Activated CD8-positive, alpha-beta memory T cell treated with anti-CD3 and anti-CD28 coated beads, Interleukin-2, amount 10 ng/mL, durations not matched to agents 7 days and 5 days (primary cell): ENCODE measurements at regions of chr22 and their contacts with region 1.

Region 1: DNA sequence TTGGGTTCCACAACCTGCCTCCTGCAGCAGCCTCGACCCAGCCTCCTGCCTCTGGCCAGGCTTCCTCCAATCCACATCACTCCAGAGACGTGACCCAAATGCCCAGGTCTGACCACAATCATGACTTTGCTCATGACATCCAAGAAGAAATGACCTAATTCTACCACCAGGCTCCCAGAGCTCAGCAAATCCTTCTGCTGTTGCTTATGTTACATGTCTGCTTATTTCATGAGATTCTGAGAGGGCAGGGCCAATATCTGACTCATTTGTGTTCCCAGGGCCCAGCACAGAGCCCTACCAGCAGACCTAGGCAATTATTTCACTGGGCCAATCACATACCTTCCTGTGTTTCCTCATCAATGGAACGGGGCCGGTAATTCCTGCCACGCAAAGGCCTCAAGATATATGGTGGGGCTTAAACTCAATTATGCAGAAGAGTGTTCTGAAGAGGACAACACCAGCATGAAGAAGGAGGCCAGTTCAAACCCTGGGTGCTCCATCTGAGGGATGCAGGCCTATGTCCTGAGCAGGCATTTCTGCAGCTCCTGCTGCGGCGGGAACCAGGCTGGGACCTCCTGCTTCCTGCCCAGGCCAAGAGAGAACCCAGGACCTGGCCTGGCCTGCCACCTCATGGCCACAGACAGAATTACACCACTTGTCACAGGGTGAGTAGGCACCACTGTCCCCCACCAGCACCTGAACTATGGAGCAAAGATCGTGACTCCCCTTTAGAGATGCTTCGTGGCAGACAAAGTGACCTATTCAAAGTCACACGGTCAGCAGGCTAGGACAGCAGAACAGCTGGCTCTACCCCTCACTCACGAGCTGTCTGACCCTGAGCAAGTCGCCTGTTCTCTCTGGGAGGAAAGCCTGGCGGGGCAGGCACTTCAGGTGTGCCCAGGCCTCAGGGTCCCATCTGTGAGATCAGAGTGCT is 5.9 kb downstream of the CENPM start:
- DNase-seq: peak; percentile 93
- ATAC-seq: peak; percentile 62
- H3K4me3 Mint-ChIP-seq: peak overlapping the region; percentile 34
- H3K27ac Mint-ChIP-seq: peak overlapping the region; percentile 98
- H3K4me1 Mint-ChIP-seq: peaks cover 63% of the 10 kb centered on the region
- H3K27me3 Mint-ChIP-seq: no peaks in the 10 kb centered on the region

Region 2: GRCh38 chr22:41688365-41689211 is 252.5 kb before region 1 on chr22 and contains the start of gene SNU13:
- CTCF ChIA-PET with region 1: interaction called, 10 read pairs
- DNase-seq: peak; percentile 96
- ATAC-seq: peak; percentile 93
- H3K4me3 Mint-ChIP-seq: peak within 1 kb of the TSS; percentile 96
- H3K27ac Mint-ChIP-seq: peak within 1 kb of the TSS; percentile 98
- H3K4me1 Mint-ChIP-seq: peaks cover 33% of the 10 kb centered on the region
- H3K27me3 Mint-ChIP-seq: no peaks in the 10 kb centered on the region
- total RNA-seq, gene SNU13: 176 to 193 TPM

Region 3: DNA sequence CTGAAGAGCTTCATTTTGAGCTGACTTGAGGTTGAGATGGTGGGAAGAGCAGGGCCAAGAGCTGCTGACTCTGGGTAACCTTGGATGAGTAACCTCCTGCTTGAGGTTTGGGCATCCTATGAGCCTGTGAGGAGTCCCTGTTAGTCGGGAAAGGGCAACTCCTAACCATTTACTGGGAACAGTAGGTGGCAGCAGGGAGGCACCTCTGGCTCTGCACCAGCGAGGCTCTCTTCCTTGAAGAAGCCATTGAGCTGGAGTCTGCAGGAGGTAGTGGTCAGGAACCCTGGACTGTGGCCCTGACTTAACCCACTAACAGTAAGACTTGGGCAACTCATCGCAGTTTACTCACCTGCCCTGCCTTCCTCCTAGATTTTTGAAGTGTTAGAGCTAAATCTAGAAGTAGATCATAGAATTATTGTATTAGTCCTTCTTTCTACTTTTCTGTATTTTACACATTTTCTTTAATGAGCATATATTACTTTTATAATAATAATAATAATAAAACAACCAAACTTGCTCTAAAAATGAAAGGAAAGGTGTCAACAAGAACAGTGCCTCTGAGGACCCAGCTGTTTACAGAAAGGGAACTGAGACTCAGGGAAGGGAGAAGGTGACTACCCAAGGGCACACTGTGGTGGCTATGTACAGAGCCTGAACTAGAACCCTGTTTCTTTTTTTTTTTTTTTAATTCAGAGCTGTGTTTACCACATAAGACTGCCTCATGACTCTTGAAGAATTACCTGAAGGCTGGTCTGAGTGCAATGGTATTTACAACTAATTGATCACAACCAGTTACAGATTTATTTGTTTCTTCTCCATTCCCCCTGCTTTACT is 194.3 kb before region 1 on chr22:
- CTCF ChIA-PET with region 1: interaction called, 25 read pairs
- DNase-seq: peak; percentile 72
- ATAC-seq: peak; percentile 96
- H3K4me3 Mint-ChIP-seq: no peak overlapping the region
- H3K27ac Mint-ChIP-seq: no peak overlapping the region
- H3K4me1 Mint-ChIP-seq: peaks cover 6% of the 10 kb centered on the region
- H3K27me3 Mint-ChIP-seq: peaks cover 15% of the 10 kb centered on the region

Region 4: GRCh38 chr22:41832553-41833368 is 108.3 kb before region 1 on chr22 and contains the start of gene SREBF2:
- CTCF ChIA-PET with region 1: interaction called, 37 read pairs
- DNase-seq: peak; percentile 100
- ATAC-seq: peak; percentile 95
- H3K4me3 Mint-ChIP-seq: peak within 1 kb of the TSS; percentile 82
- H3K27ac Mint-ChIP-seq: peak within 1 kb of the TSS; percentile 99
- H3K4me1 Mint-ChIP-seq: peaks cover 44% of the 10 kb centered on the region
- H3K27me3 Mint-ChIP-seq: no peaks in the 10 kb centered on the region
- total RNA-seq, gene SREBF2: 130 to 135 TPM

Region 5: DNA sequence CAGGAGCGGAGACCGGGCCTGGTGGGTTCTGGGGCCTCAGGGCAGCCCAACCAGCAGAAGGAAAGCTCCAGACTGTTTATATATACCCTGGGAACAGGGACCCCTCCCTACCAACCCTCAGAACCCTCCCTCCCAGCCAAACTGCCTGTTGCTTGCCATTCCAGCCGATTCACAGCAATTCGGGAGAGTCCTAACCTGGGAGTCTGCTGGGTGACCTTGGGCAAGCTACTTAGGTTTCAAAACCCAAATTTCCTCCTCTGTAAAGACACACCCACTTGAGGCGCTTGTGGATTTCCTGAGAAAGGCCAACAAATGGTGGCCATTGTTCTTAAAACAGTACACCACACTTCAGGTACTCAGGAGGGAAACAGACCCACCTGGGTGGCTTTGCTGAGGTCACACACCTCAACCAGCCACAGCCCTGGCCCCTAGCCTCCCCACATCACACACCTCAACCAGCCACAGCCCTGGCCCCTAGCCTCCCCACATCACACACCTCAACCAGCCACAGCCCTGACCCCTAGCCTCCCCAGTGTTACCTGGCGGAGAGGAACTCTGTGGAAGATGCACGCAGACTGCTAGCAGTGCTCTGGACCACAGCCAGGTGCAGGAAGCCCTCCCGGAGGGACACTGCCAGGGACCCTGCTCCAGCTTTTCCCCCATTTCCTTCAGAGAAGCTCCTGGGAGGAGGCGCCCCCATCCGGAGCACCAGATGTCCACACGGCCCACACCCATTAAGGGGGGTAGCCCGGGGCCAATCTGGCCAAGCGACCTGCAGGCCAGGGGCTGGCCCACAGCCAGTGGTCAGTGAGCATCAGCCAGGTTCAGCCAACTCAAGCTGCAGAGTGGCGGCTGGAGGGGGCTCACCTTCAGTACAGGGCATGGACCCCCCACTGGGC is 32.4 kb before region 1 on chr22:
- CTCF ChIA-PET with region 1: interaction called, 15 read pairs
- DNase-seq: peak; percentile 73
- ATAC-seq: peak; percentile 37
- H3K4me3 Mint-ChIP-seq: peak overlapping the region; percentile 32
- H3K27ac Mint-ChIP-seq: peak overlapping the region; percentile 63
- H3K4me1 Mint-ChIP-seq: peaks cover 27% of the 10 kb centered on the region
- H3K27me3 Mint-ChIP-seq: peaks cover 38% of the 10 kb centered on the region

Region 6: GRCh38 chr22:42033263-42034181 is 92.4 kb after region 1 on chr22:
- CTCF ChIA-PET with region 1: no interaction called
- DNase-seq: no peak
- ATAC-seq: no peak
- H3K4me3 Mint-ChIP-seq: no peak overlapping the region
- H3K27ac Mint-ChIP-seq: no peak overlapping the region
- H3K4me1 Mint-ChIP-seq: peaks cover 22% of the 10 kb centered on the region
- H3K27me3 Mint-ChIP-seq: peaks cover 3% of the 10 kb centered on the region

Region 7: GRCh38 chr22:42114721-42115120 is 173.6 kb after region 1 on chr22:
- CTCF ChIA-PET with region 1: no interaction called
- DNase-seq: no peak
- ATAC-seq: no peak
- H3K4me3 Mint-ChIP-seq: no peak overlapping the region
- H3K27ac Mint-ChIP-seq: no peak overlapping the region
- H3K4me1 Mint-ChIP-seq: peaks cover 9% of the 10 kb centered on the region
- H3K27me3 Mint-ChIP-seq: no peaks in the 10 kb centered on the region